ENCODE measurements at regions of chr3 and their contacts with region 1.

Region 1: GRCh38 chr3:55721716-55722484 is 234.8 kb upstream of the WNT5A start:
- DNase-seq: peak; percentile 51
- ATAC-seq: peak; percentile 76
- H3K4me3 ChIP-seq: no peak overlapping the region
- H3K27ac ChIP-seq: no peak overlapping the region
- H3K4me1 ChIP-seq: peaks cover 6% of the 10 kb centered on the region
- H3K27me3 ChIP-seq: peaks cover 6% of the 10 kb centered on the region; the same call in 1 of the 2 replicates
- CTCF ChIP-seq: peak; percentile 72
- POLR2A ChIP-seq: no peak
- RAD21 ChIP-seq: peak; percentile 83

Region 2: DNA sequence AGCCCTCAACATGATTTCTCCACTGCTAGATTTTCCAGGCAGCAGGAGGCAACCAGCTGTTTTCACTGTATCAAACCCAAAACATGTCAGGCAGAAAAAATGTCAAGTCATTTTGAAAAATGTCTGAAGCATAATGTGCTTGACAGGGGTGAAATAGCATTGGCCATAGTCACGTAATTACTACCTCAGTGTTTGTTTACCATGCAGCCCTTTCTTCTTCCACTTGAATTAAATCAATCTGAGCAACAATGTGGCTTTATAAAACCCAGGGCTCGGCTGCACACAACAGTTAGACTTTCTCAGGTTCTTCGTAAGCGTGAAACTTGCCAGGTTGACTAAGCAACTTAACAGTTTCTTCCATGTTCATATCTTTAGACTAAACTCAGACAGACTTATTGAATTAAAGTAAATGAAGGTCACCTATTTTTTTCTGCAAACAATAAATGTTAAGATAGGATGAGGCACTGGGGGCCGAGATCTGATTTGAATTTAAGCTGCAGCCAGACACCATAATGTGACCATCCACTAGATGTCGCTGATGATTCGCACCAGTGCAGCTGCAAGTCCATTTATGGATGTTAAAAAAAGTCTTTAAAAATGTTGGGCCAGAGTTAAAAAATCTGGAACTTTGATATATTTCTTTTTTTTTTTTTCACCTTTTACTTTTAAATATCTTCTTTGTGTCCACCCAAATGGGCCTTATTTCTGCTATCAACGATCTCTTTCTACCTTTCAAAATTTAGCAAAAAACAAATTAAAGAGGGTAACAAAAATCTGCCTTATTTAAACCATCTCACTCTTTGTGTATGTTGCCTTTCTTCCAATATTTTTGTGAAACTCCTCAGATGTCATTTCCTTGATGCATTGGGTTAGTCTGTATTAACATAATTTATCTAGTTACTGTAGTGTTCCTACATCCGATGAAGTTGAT is 1293.7 kb before region 1 on chr3:
- CTCF ChIA-PET with region 1: no interaction called
- POLR2A ChIA-PET with region 1: no interaction called
- dilution Hi-C with region 1: no loop called
- in situ Hi-C with region 1: loop called (anchors 10 kb)
- intact Hi-C with region 1: loop called (anchors 1 kb)
- DNase-seq: peak; percentile 76
- ATAC-seq: peak; percentile 90
- H3K4me3 ChIP-seq: no peak overlapping the region
- H3K27ac ChIP-seq: no peak overlapping the region
- H3K4me1 ChIP-seq: no peaks in the 10 kb centered on the region
- H3K27me3 ChIP-seq: no peaks in the 10 kb centered on the region
- CTCF ChIP-seq: peak; percentile 88
- POLR2A ChIP-seq: no peak
- RAD21 ChIP-seq: peak; percentile 83

Region 3: GRCh38 chr3:54870423-54870822 is 851.5 kb before region 1 on chr3:
- CTCF ChIA-PET with region 1: no interaction called
- POLR2A ChIA-PET with region 1: no interaction called
- dilution Hi-C with region 1: no loop called
- in situ Hi-C with region 1: loop called (anchors 10 kb)
- intact Hi-C with region 1: loop called (anchors 1 kb)
- DNase-seq: peak; percentile 97
- ATAC-seq: peak; percentile 98
- H3K4me3 ChIP-seq: no peak overlapping the region
- H3K27ac ChIP-seq: peak overlapping the region; percentile 70
- H3K4me1 ChIP-seq: peaks cover 3% of the 10 kb centered on the region
- H3K27me3 ChIP-seq: no peaks in the 10 kb centered on the region
- CTCF ChIP-seq: peak; percentile 88
- POLR2A ChIP-seq: peak; percentile 40; the same call in 1 of the 2 replicates
- RAD21 ChIP-seq: peak; percentile 92

Region 4: GRCh38 chr3:55042591-55042990 is 679.3 kb before region 1 on chr3:
- CTCF ChIA-PET with region 1: no interaction called
- POLR2A ChIA-PET with region 1: no interaction called
- dilution Hi-C with region 1: no loop called
- in situ Hi-C with region 1: no loop called
- intact Hi-C with region 1: loop called (anchors 2 kb)
- DNase-seq: peak; percentile 30
- ATAC-seq: peak; percentile 40; the same call in 1 of the 2 replicates
- H3K4me3 ChIP-seq: no peak overlapping the region
- H3K27ac ChIP-seq: no peak overlapping the region
- H3K4me1 ChIP-seq: no peaks in the 10 kb centered on the region
- H3K27me3 ChIP-seq: no peaks in the 10 kb centered on the region
- CTCF ChIP-seq: peak; percentile 41
- POLR2A ChIP-seq: no peak
- RAD21 ChIP-seq: peak; percentile 73

Region 5: GRCh38 chr3:55556619-55557537 is 165.0 kb before region 1 on chr3:
- CTCF ChIA-PET with region 1: no interaction called
- POLR2A ChIA-PET with region 1: no interaction called
- dilution Hi-C with region 1: no loop called
- in situ Hi-C with region 1: no loop called
- intact Hi-C with region 1: loop called (anchors 5 kb)
- DNase-seq: peak; percentile 57
- ATAC-seq: peak; percentile 57
- H3K4me3 ChIP-seq: no peak overlapping the region
- H3K27ac ChIP-seq: no peak overlapping the region
- H3K4me1 ChIP-seq: peaks cover 7% of the 10 kb centered on the region
- H3K27me3 ChIP-seq: no peaks in the 10 kb centered on the region
- CTCF ChIP-seq: no peak
- POLR2A ChIP-seq: no peak
- RAD21 ChIP-seq: no peak

Region 6: GRCh38 chr3:55897573-55898224 is 175.8 kb after region 1 on chr3:
- CTCF ChIA-PET with region 1: no interaction called
- POLR2A ChIA-PET with region 1: no interaction called
- dilution Hi-C with region 1: no loop called
- in situ Hi-C with region 1: no loop called
- intact Hi-C with region 1: loop called (anchors 1 kb)
- DNase-seq: peak; percentile 21
- ATAC-seq: peak; percentile 52; the same call in 1 of the 2 replicates
- H3K4me3 ChIP-seq: no peak overlapping the region
- H3K27ac ChIP-seq: no peak overlapping the region
- H3K4me1 ChIP-seq: peaks cover 6% of the 10 kb centered on the region
- H3K27me3 ChIP-seq: peaks cover 11% of the 10 kb centered on the region
- CTCF ChIP-seq: peak; percentile 58
- POLR2A ChIP-seq: no peak
- RAD21 ChIP-seq: peak; percentile 74